G401 (cell line): ENCODE measurements at regions of chr10 and their contacts with region 1.

Region 1: GRCh38 chr10:133261726-133262325 is 14.8 kb downstream of the ADAM8 start:
- DNase-seq: peak; percentile 66

Region 2: GRCh38 chr10:133159950-133160819 is 101.6 kb before region 1 on chr10 and contains the start of gene KNDC1:
- in situ Hi-C with region 1: loop called (anchors 10 kb)
- DNase-seq: peak; percentile 35
- total RNA-seq, gene KNDC1: 0.47 and 4.0 TPM in 2 replicates